ENCODE measurements at regions of chr9 and their contacts with region 1.

Region 1: GRCh38 chr9:122264360-122265148 is at the starts of genes MRRF and RBM18:
- DNase-seq: peak; percentile 91
- H3K4me3 ChIP-seq: peak within 1 kb of the TSS; percentile 89
- H3K27ac ChIP-seq: peak within 1 kb of the TSS; percentile 92
- H3K4me1 ChIP-seq: peaks cover 12% of the 10 kb centered on the region
- H3K27me3 ChIP-seq: no peaks in the 10 kb centered on the region
- CTCF ChIP-seq: no peak
- total RNA-seq, gene MRRF: 35.0 and 44.9 TPM in 2 replicates
- total RNA-seq, gene RBM18: 29.3 and 30.8 TPM in 2 replicates

Region 2: GRCh38 chr9:120850315-120850714 is 1414.2 kb before region 1 on chr9:
- CTCF ChIA-PET with region 1: no interaction called
- POLR2A ChIA-PET with region 1: interaction called, 21 read pairs
- intact Hi-C with region 1: no loop called
- DNase-seq: no peak
- H3K4me3 ChIP-seq: no peak overlapping the region
- H3K27ac ChIP-seq: no peak overlapping the region
- H3K4me1 ChIP-seq: no peaks in the 10 kb centered on the region
- H3K27me3 ChIP-seq: no peaks in the 10 kb centered on the region
- CTCF ChIP-seq: no peak

Region 3: DNA sequence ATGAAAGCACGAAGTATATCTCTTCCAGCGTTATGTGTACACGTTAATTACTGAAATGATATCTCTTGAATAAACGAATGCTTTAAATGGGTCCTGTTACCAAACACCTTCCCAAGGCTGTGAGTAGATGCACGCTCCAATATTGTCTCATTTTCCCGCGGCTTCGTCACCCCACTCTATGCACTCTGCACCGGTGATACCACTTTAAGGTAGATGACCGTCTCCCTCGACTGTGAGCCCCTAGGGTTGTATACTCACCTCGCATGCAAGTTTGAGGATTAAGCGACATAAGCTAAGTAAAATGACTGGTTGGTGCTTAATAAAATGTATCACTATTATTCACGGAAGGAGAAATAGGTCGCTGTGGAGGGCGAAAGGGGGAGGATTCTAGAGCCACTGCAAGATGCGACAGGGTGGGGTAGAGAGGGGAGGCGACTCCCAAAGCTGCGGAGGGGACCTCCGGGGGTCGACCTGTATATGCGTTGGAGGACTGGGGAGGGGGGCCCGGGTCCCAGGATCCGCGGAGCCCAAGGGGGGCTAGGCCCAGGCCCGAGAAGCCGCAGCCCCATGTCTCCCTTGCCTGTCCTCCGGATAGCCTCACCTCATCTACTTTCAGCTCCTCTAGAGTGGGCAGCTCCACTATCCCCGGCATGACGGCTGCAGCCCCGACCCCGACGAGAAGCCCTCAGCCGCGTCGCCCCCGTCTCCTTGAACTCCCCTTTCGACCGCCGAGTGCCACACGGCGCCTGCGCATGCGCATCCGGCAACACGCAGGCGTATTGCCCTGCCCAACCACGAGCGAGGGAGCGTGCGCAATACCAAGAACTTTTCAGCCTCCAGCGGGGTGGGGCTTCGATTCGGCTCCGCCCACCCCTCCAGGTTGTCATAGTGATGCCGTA is 105.3 kb before region 1 on chr9 and contains the starts of genes MORN5 and NDUFA8:
- CTCF ChIA-PET with region 1: no interaction called
- POLR2A ChIA-PET with region 1: no interaction called
- intact Hi-C with region 1: loop called (anchors 10 kb)
- DNase-seq: peak; percentile 97
- H3K4me3 ChIP-seq: peak within 1 kb of the TSS; percentile 94
- H3K27ac ChIP-seq: peak within 1 kb of the TSS; percentile 90
- H3K4me1 ChIP-seq: no peaks in the 10 kb centered on the region
- H3K27me3 ChIP-seq: peaks cover 18% of the 10 kb centered on the region
- CTCF ChIP-seq: no peak
- total RNA-seq, gene MORN5: not detected in 2 replicates
- total RNA-seq, gene NDUFA8: 105 and 107 TPM in 2 replicates

Region 4: GRCh38 chr9:122370303-122370702 is 105.7 kb after region 1 on chr9:
- CTCF ChIA-PET with region 1: no interaction called
- POLR2A ChIA-PET with region 1: no interaction called
- intact Hi-C with region 1: no loop called
- DNase-seq: no peak
- H3K4me3 ChIP-seq: no peak overlapping the region
- H3K27ac ChIP-seq: no peak overlapping the region
- H3K4me1 ChIP-seq: no peaks in the 10 kb centered on the region
- H3K27me3 ChIP-seq: peaks cover 28% of the 10 kb centered on the region
- CTCF ChIP-seq: no peak